OCI-LY7 (cell line): ENCODE measurements at regions of chr10 and their contacts with region 1.

Region 1: DNA sequence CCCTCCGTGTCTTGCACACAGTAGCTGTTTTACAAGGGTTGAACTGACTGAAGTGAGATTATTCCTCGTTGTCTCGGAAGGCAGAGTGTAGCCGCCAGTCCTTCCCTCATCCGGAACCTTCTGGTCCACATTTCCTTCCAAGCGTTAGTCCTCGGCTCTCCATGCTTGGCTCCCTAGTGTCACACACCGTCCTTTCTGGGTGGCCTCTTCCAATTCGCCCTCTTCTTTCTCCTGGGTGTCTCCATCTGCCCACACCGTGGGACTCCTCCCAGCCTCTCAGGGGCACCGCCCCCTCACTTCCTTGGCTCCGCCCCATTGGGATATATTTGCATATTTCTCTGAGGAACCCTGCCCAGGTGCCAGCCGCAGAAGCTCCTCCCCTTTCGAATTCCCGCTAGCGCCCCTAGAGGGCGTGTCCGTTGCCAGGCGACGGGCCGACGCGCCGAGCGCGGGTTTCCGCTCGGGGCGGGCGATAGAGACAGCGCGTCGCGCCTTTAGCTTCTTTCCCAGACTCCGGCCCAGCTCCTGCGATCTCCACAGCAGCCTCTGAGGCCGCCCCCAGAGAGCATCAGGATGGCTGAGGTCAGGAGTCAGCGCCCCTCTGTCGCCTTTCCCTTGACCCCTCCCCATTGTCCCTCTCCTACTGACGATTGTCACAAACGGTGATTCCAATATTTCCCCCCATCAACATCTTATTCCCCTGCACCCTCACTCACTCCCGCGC is at the start of gene CFAP58:
- DNase-seq: peak; percentile 87
- H3K4me3 ChIP-seq: peak within 1 kb of the TSS; percentile 68
- H3K27ac ChIP-seq: no peak within 1 kb of the TSS
- H3K4me1 ChIP-seq: peaks cover 33% of the 10 kb centered on the region
- CTCF ChIP-seq: peak; percentile 71
- total RNA-seq, gene CFAP58: 0.09 and 0.36 TPM in 2 replicates

Region 2: GRCh38 chr10:103918053-103918846 is 435.2 kb before region 1 on chr10 and contains the start of gene STN1:
- CTCF ChIA-PET with region 1: no interaction called
- POLR2A ChIA-PET with region 1: no interaction called
- intact Hi-C with region 1: loop called (anchors 10 kb)
- DNase-seq: peak; percentile 97
- H3K4me3 ChIP-seq: peak within 1 kb of the TSS; percentile 75
- H3K27ac ChIP-seq: peak within 1 kb of the TSS; percentile 55
- H3K4me1 ChIP-seq: peaks cover 28% of the 10 kb centered on the region
- CTCF ChIP-seq: peak; percentile 54
- total RNA-seq, gene STN1: 19.5 and 20.9 TPM in 2 replicates

Region 3: DNA sequence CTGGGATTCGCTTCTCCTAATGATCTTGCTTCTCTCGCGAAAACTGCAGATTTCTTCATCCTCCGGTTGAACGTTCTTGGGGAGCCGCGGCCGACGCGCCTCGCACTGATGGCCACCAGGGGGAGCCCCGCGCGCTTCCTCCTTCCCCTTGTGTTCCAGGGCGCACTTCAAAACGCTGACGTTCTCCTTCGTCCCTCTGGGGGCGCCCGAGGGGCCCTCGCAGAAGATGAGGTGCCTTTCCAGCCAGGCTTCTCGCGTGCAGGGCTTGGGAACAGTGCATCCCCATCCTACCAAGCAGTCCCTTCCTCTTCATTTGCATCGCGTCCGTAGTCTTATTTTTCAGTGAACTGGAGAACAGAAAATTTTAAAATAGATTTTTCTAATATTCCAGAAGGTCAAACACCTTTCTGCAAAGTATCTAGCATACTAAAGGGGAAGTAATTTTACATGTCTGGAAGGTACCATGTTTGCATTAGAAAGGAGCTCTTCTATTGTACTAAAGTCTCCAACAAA is 62.0 kb before region 1 on chr10:
- CTCF ChIA-PET with region 1: interaction called, 8 read pairs
- POLR2A ChIA-PET with region 1: interaction called, 6 read pairs
- intact Hi-C with region 1: loop called (anchors 1 kb)
- DNase-seq: peak; percentile 91
- H3K4me3 ChIP-seq: no peak overlapping the region
- H3K27ac ChIP-seq: no peak overlapping the region
- H3K4me1 ChIP-seq: no peaks in the 10 kb centered on the region
- CTCF ChIP-seq: peak; percentile 100

Region 4: DNA sequence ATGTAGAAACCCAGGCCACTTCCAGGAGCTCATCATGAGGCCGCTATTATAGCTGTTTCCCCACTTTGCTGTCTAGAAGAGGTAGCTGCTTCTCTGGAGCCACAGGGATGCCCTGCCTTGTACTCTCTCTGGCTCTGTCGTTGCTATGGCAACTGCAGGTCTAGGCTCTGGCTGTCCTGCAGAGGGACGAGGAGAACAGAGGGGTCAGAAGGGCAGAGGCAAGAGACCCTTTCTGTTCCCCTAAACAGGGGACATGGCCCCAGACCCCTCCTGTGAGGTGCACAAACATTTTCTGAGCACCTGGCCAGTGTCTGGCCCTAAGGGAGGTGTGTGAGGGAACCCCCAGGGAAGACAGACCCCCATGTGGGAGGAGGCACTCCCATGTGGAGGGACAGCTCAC is 46.6 kb before region 1 on chr10:
- CTCF ChIA-PET with region 1: interaction called, 28 read pairs
- POLR2A ChIA-PET with region 1: interaction called, 3 read pairs
- intact Hi-C with region 1: loop called (anchors 1 kb)
- DNase-seq: no peak
- H3K4me3 ChIP-seq: no peak overlapping the region
- H3K27ac ChIP-seq: no peak overlapping the region
- H3K4me1 ChIP-seq: peaks cover 6% of the 10 kb centered on the region
- CTCF ChIP-seq: no peak

Region 5: GRCh38 chr10:104322416-104322782 is 31.1 kb before region 1 on chr10:
- CTCF ChIA-PET with region 1: no interaction called
- POLR2A ChIA-PET with region 1: interaction called, 3 read pairs
- intact Hi-C with region 1: loop called (anchors 1 kb)
- DNase-seq: peak; percentile 77
- H3K4me3 ChIP-seq: peak overlapping the region; percentile 19
- H3K27ac ChIP-seq: peak overlapping the region; percentile 70
- H3K4me1 ChIP-seq: peaks cover 73% of the 10 kb centered on the region
- CTCF ChIP-seq: no peak